ENCODE measurements at regions of chr14 and their contacts with region 1.

Region 1: DNA sequence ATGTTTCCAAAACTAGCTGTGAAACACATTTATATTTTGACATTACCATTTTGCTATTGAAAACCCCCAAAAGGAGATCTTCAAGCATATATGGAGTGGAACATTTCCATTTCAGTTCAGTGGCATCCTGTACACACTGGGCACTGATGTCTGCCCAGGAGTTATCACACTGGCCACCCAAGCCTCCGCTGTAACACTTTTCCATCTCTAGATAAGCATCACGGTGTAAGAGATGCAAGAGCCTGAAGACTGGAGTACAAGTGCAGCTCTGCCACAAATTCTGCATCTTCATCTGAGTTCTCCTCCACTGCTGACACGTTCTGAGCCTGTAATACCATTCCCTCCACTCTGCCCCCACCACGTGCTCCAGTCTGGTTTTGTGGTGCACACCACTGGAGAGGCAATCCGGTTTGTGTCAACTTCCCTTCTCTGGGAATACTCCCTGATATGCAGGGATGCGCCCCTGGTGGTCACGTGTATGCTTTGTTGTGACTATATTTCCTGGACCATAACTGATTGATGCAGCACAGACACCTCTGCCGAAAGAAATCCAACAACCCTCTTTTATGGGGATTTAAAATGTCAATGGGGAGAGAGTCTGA is 12.7 kb downstream of the SPTLC2 start:
- DNase-seq: peak; percentile 53
- H3K4me3 ChIP-seq: no peak overlapping the region
- H3K27ac ChIP-seq: no peak overlapping the region
- H3K4me1 ChIP-seq: peaks cover 23% of the 10 kb centered on the region
- H3K27me3 ChIP-seq: no peaks in the 10 kb centered on the region
- CTCF ChIP-seq: peak; percentile 67

Region 2: GRCh38 chr14:77589099-77589498 is 14.7 kb before region 1 on chr14:
- CTCF ChIA-PET with region 1: interaction called, 15 read pairs
- POLR2A ChIA-PET with region 1: no interaction called
- intact Hi-C with region 1: no loop called
- DNase-seq: peak; percentile 15
- H3K4me3 ChIP-seq: no peak overlapping the region
- H3K27ac ChIP-seq: peak overlapping the region; percentile 27
- H3K4me1 ChIP-seq: peaks cover 38% of the 10 kb centered on the region
- H3K27me3 ChIP-seq: no peaks in the 10 kb centered on the region
- CTCF ChIP-seq: no peak